HCT116 (cell line): ENCODE measurements at regions of chrX and their contacts with region 1.

Region 1: GRCh38 chrX:119729408-119730201 is 28.8 kb upstream of the SOWAHD start:
- DNase-seq: peak; percentile 54
- ATAC-seq: peak; percentile 81
- H3K4me3 ChIP-seq: no peak overlapping the region
- H3K27ac ChIP-seq: no peak overlapping the region
- H3K4me1 ChIP-seq: no peaks in the 10 kb centered on the region
- H3K27me3 ChIP-seq: no peaks in the 10 kb centered on the region
- CTCF ChIP-seq: peak; percentile 47 to 81 (median 54)
- POLR2A ChIP-seq: no peak
- RAD21 ChIP-seq: peak; percentile 80

Region 2: DNA sequence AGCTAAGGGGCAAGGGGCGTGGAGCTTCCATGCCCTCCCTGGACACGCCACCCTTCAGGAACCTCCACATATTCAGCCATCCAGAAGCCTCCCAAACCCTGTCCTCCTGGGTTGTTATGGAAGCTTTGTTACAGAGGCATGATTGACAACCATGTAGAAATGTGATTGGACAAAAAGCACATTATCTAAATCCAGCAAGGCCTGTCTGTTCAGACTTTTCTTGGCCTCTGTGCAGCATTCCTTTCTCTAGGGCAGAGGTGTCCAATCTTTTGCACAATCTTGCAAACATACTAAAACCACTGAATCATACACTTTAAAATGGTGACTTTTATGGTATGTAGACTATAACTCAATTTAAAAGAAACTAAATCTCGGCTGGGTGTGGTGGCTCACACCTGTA is 177.1 kb before region 1 on chrX:
- CTCF ChIA-PET with region 1: no interaction called
- POLR2A ChIA-PET with region 1: no interaction called
- RAD21 ChIA-PET with region 1: no interaction called
- intact Hi-C with region 1: no loop called
- DNase-seq: no peak
- ATAC-seq: no peak
- H3K4me3 ChIP-seq: no peak overlapping the region
- H3K27ac ChIP-seq: no peak overlapping the region
- H3K4me1 ChIP-seq: no peaks in the 10 kb centered on the region
- H3K27me3 ChIP-seq: no peaks in the 10 kb centered on the region
- CTCF ChIP-seq: no peak
- POLR2A ChIP-seq: no peak
- RAD21 ChIP-seq: no peak

Region 3: DNA sequence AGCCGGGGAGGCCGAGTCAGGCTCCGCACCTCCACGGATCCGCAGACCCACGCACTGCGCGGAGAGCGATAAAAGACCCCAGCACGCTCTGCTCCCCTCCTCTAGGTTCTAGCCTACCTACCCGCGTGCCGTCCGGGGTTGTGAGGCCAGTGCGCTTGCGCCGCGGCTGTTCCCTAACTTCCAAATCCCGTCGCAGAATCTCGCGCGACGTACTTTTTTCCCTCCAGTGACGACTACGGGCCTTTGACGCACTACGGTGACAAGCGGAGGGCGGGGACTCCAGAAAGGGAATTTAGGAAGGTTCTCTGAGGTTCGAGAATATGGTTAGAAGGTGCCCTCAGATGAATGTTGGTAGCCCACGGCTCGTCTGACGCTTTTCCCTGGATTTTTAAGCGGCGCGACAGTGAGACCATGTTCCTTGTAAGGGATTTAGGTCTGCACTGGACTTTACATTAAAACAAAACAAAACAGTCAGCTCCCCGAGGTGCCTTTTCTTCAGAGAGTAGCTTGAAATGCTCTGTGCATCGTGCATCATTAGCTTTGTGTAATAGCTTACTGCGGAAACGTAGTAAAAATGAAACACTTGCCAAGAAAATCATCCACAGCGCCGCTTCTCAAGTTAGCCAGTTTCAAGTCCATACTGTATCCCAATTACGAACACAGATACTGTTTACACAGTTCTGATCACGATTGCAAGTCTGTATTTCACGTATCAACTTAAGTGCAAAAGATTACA is 123.2 kb before region 1 on chrX and contains the start of gene NKRF:
- CTCF ChIA-PET with region 1: interaction called, 4 read pairs
- POLR2A ChIA-PET with region 1: no interaction called
- RAD21 ChIA-PET with region 1: interaction called in 1 of 2 experiments, 3 read pairs
- intact Hi-C with region 1: loop called (anchors 2 kb)
- DNase-seq: peak; percentile 79
- ATAC-seq: peak; percentile 85
- H3K4me3 ChIP-seq: peak within 1 kb of the TSS; percentile 75 to 77
- H3K27ac ChIP-seq: peak within 1 kb of the TSS; percentile 85
- H3K4me1 ChIP-seq: peaks cover 6 to 14% of the 10 kb centered on the region in 2 experiments; a peak in 3 of 4 replicates
- H3K27me3 ChIP-seq: no peaks in the 10 kb centered on the region
- CTCF ChIP-seq: no peak
- POLR2A ChIP-seq: peak; percentile 30
- RAD21 ChIP-seq: no peak
- total RNA-seq, gene NKRF: 22.8 TPM

Region 4: DNA sequence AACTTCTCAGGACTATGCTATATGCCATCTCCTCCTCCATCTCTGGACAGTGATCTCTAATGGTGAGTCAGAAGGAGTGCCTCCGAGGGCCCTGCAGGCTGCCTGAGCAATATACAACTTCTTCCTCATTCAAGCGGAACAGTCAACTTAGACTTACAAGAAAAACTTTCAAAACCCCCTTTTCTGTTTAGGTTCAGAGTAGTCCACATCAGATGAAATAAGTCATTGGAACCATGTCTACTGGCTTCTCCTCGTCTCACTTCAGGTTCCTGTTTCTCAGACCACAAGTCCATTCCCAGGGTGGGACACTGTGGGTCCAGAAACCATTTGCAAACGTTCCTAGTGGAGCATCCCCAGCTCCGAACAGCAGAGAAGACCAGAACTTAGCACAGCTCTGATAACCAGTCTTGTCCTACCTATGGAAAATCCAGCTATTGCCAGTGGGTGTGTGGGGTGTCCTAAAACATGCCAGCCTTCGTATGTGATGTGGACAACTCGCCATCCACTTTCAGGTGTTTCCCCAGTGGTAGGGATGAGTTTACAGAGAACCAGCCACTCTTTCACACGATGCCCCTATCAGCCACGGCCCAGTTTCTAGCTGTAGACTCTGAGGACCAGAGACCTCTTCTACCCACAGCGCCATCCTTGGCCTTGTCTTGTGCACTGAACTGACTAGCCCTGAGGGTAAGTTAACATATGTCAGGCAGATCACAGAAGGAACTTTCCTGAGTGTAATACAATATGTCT is 90.7 kb before region 1 on chrX:
- CTCF ChIA-PET with region 1: no interaction called
- POLR2A ChIA-PET with region 1: no interaction called
- RAD21 ChIA-PET with region 1: no interaction called
- intact Hi-C with region 1: no loop called
- DNase-seq: no peak
- ATAC-seq: no peak
- H3K4me3 ChIP-seq: no peak overlapping the region
- H3K27ac ChIP-seq: no peak overlapping the region
- H3K4me1 ChIP-seq: no peaks in the 10 kb centered on the region
- H3K27me3 ChIP-seq: no peaks in the 10 kb centered on the region
- CTCF ChIP-seq: no peak
- POLR2A ChIP-seq: no peak
- RAD21 ChIP-seq: no peak

Region 5: GRCh38 chrX:119880552-119881437 is 151.2 kb after region 1 on chrX:
- CTCF ChIA-PET with region 1: no interaction called
- POLR2A ChIA-PET with region 1: no interaction called
- RAD21 ChIA-PET with region 1: no interaction called
- intact Hi-C with region 1: no loop called
- DNase-seq: peak; percentile 23
- ATAC-seq: peak; percentile 94
- H3K4me3 ChIP-seq: no peak overlapping the region
- H3K27ac ChIP-seq: no peak overlapping the region
- H3K4me1 ChIP-seq: no peaks in the 10 kb centered on the region
- H3K27me3 ChIP-seq: no peaks in the 10 kb centered on the region
- CTCF ChIP-seq: peak; percentile 25 to 70 (median 57); a peak in 5 of 6 replicates
- POLR2A ChIP-seq: no peak
- RAD21 ChIP-seq: peak; percentile 56

Region 6: GRCh38 chrX:119970574-119970973 is 241.0 kb after region 1 on chrX:
- CTCF ChIA-PET with region 1: no interaction called
- POLR2A ChIA-PET with region 1: no interaction called
- RAD21 ChIA-PET with region 1: no interaction called
- intact Hi-C with region 1: no loop called
- DNase-seq: no peak
- ATAC-seq: no peak
- H3K4me3 ChIP-seq: no peak overlapping the region
- H3K27ac ChIP-seq: no peak overlapping the region
- H3K4me1 ChIP-seq: no peaks in the 10 kb centered on the region
- H3K27me3 ChIP-seq: no peaks in the 10 kb centered on the region
- CTCF ChIP-seq: no peak
- POLR2A ChIP-seq: no peak
- RAD21 ChIP-seq: no peak